ENCODE measurements at regions of chr2 and their contacts with region 1.

Region 1: DNA sequence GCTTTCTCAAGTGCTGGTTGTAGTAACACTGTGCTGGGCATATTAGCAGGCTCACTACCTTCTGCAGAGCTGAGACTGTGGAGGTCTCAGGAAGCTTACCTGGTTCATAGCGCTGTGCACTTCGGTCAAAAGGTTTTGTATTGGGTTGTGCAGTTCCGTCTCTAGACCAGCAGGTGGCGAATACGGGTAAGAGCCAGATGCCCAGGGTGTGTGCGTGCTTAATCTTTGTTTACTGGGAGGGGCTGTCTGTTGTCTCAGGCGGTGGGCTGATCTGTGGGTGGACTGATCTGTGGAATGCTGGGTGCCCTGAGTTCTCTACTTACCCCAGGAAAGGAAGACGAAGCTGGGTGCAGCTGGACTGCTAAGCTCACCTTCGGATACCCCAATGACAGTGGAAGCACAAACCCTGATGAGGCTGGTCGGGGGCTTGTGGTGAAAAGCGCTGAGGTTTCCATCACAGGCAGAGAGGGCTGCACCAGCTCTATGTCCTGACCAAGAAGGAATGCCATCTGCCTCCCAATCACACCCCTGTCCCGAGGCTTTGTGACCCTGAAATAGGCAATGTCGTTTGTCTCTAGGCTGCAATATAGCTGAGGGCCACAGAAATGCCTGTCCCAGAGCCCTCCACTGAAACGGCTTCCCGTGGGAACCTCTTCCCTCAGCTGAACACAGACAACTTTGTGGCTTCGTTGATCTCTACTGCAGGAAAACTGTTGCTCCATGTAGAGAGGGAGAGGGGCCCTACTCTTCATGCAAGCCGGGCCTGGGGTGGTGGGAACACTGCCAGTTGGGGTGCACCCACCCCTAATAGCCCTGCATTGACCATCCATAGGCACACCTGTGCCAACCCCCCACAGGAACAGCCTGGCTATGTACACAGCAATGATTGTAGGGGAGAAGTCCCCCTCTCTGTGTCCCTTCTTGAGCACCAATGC is 45.9 kb upstream of the FAM117B start:
- DNase-seq: peak; percentile 83
- H3K4me3 ChIP-seq: no peak overlapping the region
- H3K27ac ChIP-seq: no peak overlapping the region
- H3K4me1 ChIP-seq: peaks cover 5% of the 10 kb centered on the region
- H3K27me3 ChIP-seq: no peaks in the 10 kb centered on the region
- CTCF ChIP-seq: peak; percentile 93

Region 2: DNA sequence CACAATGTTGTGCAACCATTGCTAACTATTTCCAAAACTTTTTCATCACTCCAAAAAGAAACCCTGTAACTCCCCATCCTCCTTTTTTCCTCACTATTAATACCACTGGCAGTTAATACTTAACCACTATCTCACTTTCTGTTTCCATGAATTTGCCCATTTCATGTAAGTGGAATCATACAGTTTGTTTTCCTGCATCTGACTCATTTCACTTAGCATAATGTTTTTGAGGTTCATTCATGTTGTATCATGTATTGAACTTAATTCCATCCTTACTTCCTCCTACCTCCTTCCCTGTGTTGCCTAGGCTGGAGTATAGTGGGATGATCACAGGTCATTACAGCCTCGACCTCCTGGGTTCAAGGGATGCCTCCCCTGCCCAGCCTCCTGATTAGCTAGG is 114.2 kb after region 1 on chr2:
- CTCF ChIA-PET with region 1: interaction called, 14 read pairs
- POLR2A ChIA-PET with region 1: no interaction called
- intact Hi-C with region 1: no loop called
- DNase-seq: no peak
- H3K4me3 ChIP-seq: no peak overlapping the region
- H3K27ac ChIP-seq: no peak overlapping the region
- H3K4me1 ChIP-seq: no peaks in the 10 kb centered on the region
- H3K27me3 ChIP-seq: no peaks in the 10 kb centered on the region
- CTCF ChIP-seq: no peak

Region 3: GRCh38 chr2:202750763-202751427 is 162.0 kb after region 1 on chr2:
- CTCF ChIA-PET with region 1: no interaction called
- POLR2A ChIA-PET with region 1: no interaction called
- intact Hi-C with region 1: no loop called
- DNase-seq: no peak
- H3K4me3 ChIP-seq: no peak overlapping the region
- H3K27ac ChIP-seq: no peak overlapping the region
- H3K4me1 ChIP-seq: no peaks in the 10 kb centered on the region
- H3K27me3 ChIP-seq: no peaks in the 10 kb centered on the region
- CTCF ChIP-seq: no peak

Region 4: DNA sequence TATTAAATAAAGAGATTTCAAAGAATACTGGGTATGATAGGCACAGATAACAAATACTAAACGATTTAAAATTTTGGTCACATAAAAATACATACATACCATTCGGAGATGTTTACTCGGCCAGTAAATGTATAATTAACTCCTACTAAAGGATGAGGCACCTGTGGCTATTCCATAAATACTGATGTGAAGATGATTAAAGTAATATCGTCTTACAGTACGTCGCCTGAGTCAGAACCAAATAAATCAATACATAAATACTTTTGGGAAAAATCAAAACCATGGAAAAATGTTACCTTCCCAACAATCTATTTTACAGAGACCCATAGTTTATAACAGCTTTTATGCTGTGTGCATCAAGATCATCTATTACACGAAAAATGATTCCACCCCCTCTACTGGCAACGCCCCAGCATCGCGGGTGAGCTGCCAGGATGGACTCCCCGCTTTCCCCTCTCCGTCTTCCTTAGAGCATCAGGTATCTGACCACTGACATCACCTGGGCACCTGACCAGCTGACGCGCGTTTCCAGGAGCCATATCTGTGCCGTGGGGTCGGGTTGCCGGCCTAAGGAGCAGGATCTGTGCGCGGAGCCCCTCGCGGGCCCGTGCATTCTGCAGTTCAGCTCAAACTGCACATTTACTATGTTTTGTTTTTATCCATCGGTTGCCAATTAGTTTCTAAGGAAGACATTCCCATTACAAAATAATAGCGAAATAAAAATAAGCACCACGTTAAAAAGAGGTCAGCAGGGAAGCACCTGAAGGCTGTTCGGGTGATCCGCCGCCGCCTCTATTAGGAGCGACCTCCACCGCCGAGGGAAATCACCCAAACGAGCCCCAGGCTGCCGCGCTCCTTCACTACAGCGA is 281.8 kb after region 1 on chr2:
- CTCF ChIA-PET with region 1: interaction called, 4 read pairs
- POLR2A ChIA-PET with region 1: no interaction called
- intact Hi-C with region 1: loop called (anchors 5 kb)
- DNase-seq: peak; percentile 75
- H3K4me3 ChIP-seq: peak overlapping the region; percentile 84
- H3K27ac ChIP-seq: peak overlapping the region; percentile 76
- H3K4me1 ChIP-seq: peaks cover 5% of the 10 kb centered on the region
- H3K27me3 ChIP-seq: no peaks in the 10 kb centered on the region
- CTCF ChIP-seq: peak; percentile 71

Region 5: GRCh38 chr2:203376173-203376572 is 787.3 kb after region 1 on chr2:
- CTCF ChIA-PET with region 1: no interaction called
- POLR2A ChIA-PET with region 1: no interaction called
- intact Hi-C with region 1: no loop called
- DNase-seq: no peak
- H3K4me3 ChIP-seq: no peak overlapping the region
- H3K27ac ChIP-seq: no peak overlapping the region
- H3K4me1 ChIP-seq: no peaks in the 10 kb centered on the region
- H3K27me3 ChIP-seq: no peaks in the 10 kb centered on the region
- CTCF ChIP-seq: peak; percentile 28; the same call in 1 of the 2 replicates

Region 6: GRCh38 chr2:203427061-203427460 is 838.1 kb after region 1 on chr2:
- CTCF ChIA-PET with region 1: no interaction called
- POLR2A ChIA-PET with region 1: no interaction called
- intact Hi-C with region 1: no loop called
- DNase-seq: peak; percentile 37
- H3K4me3 ChIP-seq: no peak overlapping the region
- H3K27ac ChIP-seq: no peak overlapping the region
- H3K4me1 ChIP-seq: peaks cover 5% of the 10 kb centered on the region
- H3K27me3 ChIP-seq: no peaks in the 10 kb centered on the region
- CTCF ChIP-seq: no peak

Region 7: DNA sequence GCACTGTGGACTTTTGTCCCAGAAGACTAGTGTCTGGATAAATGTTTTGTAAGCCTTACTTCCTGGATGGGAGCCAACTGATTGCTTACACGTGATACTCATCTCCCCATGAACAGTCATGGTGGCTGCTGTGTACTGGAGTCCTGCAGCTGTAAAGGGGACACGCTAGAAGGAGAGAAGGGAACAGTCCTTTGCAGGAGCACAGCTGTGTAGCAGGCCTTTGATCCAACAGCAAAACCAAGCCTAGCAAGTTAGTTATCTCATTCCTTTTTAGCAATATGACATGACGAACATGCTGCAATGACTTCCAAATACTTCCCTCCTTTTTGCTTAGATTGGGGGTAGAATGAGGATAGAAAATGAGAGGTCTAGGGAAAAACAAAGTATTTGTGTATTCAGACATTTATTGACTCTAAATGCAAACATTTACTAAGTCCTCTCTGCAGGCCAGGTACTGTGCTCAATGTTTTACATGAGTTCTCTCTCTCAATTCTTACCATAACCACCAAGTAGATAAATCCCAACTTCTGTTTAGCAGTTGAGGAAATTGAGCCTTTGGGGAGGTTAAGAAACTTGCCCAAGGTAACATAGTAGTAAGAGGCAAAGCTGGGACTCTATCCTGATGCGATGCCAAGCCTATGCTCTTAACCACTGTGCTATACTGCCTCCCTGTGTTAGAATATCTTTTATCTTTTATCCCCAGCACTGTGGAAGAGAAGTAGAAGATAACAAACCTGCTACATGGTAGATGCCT is 1062.1 kb after region 1 on chr2:
- CTCF ChIA-PET with region 1: no interaction called
- POLR2A ChIA-PET with region 1: no interaction called
- intact Hi-C with region 1: loop called (anchors 10 kb)
- DNase-seq: peak; percentile 67
- H3K4me3 ChIP-seq: no peak overlapping the region
- H3K27ac ChIP-seq: peak overlapping the region; percentile 12
- H3K4me1 ChIP-seq: peaks cover 20% of the 10 kb centered on the region
- H3K27me3 ChIP-seq: no peaks in the 10 kb centered on the region
- CTCF ChIP-seq: peak; percentile 56

Region 8: GRCh38 chr2:203909261-203909967 is 1320.5 kb after region 1 on chr2:
- CTCF ChIA-PET with region 1: no interaction called
- POLR2A ChIA-PET with region 1: no interaction called
- intact Hi-C with region 1: loop called (anchors 5 kb)
- DNase-seq: peak; percentile 63
- H3K4me3 ChIP-seq: no peak overlapping the region
- H3K27ac ChIP-seq: no peak overlapping the region
- H3K4me1 ChIP-seq: no peaks in the 10 kb centered on the region
- H3K27me3 ChIP-seq: no peaks in the 10 kb centered on the region
- CTCF ChIP-seq: peak; percentile 82

Measured in A673 (cell line).